ENCODE measurements at regions of chr5 and their contacts with region 1.

Region 1: GRCh38 chr5:147576646-147577535 is 67.0 kb upstream of the DPYSL3 start:
- DNase-seq: no peak
- ATAC-seq: peak; percentile 90
- H3K4me3 ChIP-seq: no peak overlapping the region
- H3K27ac ChIP-seq: no peak overlapping the region
- H3K4me1 ChIP-seq: no peaks in the 10 kb centered on the region
- H3K27me3 ChIP-seq: no peaks in the 10 kb centered on the region
- CTCF ChIP-seq: peak; percentile 69 to 91 (median 90)
- POLR2A ChIP-seq: no peak
- RAD21 ChIP-seq: peak; percentile 65

Region 2: DNA sequence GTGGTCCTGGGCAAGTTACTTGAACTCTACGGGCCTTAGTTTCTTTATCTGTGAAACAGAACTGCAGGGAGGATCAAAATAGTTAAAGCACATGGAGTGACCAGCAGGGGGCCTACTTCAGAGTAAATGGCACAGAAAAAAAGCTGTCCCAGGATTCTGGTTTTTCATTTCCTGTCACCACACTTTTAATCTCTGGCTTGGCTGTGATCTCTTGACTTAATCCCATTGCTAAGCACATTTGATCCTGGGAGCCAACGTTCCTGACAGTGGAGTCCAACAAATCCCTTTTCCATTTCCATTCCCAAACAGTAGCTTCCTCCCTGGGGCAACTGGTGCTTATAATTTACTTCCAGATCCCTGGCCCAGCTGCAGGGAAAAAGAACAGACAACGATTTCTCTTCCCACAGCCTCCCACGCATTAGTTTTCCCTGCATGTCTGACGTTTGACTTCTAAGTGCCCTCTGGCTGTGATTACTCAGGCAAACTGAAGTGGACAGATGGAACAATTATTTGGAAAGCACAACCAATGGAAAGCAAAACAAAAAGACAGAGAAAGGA is 478.6 kb before region 1 on chr5:
- CTCF ChIA-PET with region 1: interaction called, 5 read pairs
- POLR2A ChIA-PET with region 1: no interaction called
- RAD21 ChIA-PET with region 1: no interaction called
- intact Hi-C with region 1: loop called (anchors 5 kb)
- DNase-seq: peak; percentile 42
- ATAC-seq: peak; percentile 84
- H3K4me3 ChIP-seq: no peak overlapping the region
- H3K27ac ChIP-seq: no peak overlapping the region
- H3K4me1 ChIP-seq: peaks cover 3 to 7% of the 10 kb centered on the region in 2 experiments; a peak in 3 of 4 replicates
- H3K27me3 ChIP-seq: no peaks in the 10 kb centered on the region
- CTCF ChIP-seq: peak; percentile 44 to 72 (median 68); a peak in 5 of 6 replicates
- POLR2A ChIP-seq: no peak
- RAD21 ChIP-seq: peak; percentile 42

Region 3: DNA sequence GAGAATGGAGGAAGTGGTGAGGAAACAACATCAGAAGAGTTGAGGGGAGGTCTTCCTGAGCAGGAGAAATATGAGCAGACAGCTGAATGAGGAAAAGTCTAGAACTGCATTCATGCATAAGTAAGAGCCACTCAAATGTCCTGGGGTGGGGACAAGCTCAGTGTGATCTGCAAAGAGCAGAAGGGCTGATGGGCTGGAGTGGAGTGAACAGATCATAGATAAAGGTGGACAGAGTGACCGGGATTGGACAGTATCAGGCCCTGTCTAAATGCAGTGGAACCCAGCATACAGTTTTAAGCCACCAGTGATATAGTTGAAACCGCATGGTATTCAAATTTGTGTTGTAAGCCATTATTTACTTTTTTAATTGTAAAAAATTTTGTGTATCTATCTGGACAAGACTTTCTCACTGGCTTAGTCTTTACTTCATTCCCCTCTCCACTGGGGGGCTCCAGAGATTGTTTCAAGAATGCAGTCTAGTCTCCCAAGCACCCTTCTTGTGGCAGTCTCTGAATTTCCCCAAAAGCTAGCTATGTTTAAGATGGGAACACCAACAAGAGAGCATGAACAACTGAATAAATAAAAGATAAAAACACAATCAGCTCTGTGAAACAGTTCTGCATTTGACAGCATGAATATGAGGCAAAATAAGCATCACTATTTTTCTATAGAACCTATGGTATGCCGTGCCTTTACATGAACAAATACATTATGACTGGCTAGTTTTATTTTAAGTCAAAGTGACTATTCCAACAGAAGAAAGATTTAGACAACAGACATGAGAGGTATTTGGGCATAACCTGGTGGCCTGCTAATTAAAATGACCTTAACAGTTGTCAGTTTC is 352.7 kb before region 1 on chr5:
- CTCF ChIA-PET with region 1: interaction called, 9 read pairs
- POLR2A ChIA-PET with region 1: no interaction called
- RAD21 ChIA-PET with region 1: interaction called in 1 of 2 experiments, 3 read pairs
- intact Hi-C with region 1: loop called (anchors 1 kb)
- DNase-seq: peak; percentile 36
- ATAC-seq: peak; percentile 92
- H3K4me3 ChIP-seq: no peak overlapping the region
- H3K27ac ChIP-seq: no peak overlapping the region
- H3K4me1 ChIP-seq: no peaks in the 10 kb centered on the region
- H3K27me3 ChIP-seq: peaks cover 24% of the 10 kb centered on the region; the same call in 1 of the 2 replicates
- CTCF ChIP-seq: peak; percentile 61 to 83 (median 61)
- POLR2A ChIP-seq: no peak
- RAD21 ChIP-seq: peak; percentile 85

Region 4: GRCh38 chr5:147464211-147464610 is 112.7 kb before region 1 on chr5:
- CTCF ChIA-PET with region 1: interaction called, 49 read pairs
- POLR2A ChIA-PET with region 1: no interaction called
- RAD21 ChIA-PET with region 1: interaction called, 3 read pairs
- intact Hi-C with region 1: loop called (anchors 1 kb)
- DNase-seq: peak; percentile 19
- ATAC-seq: peak; percentile 75
- H3K4me3 ChIP-seq: no peak overlapping the region
- H3K27ac ChIP-seq: no peak overlapping the region
- H3K4me1 ChIP-seq: no peaks in the 10 kb centered on the region
- H3K27me3 ChIP-seq: no peaks in the 10 kb centered on the region
- CTCF ChIP-seq: peak; percentile 37 to 59 (median 48); a peak in 4 of 6 replicates
- POLR2A ChIP-seq: no peak
- RAD21 ChIP-seq: peak; percentile 55

Region 5: DNA sequence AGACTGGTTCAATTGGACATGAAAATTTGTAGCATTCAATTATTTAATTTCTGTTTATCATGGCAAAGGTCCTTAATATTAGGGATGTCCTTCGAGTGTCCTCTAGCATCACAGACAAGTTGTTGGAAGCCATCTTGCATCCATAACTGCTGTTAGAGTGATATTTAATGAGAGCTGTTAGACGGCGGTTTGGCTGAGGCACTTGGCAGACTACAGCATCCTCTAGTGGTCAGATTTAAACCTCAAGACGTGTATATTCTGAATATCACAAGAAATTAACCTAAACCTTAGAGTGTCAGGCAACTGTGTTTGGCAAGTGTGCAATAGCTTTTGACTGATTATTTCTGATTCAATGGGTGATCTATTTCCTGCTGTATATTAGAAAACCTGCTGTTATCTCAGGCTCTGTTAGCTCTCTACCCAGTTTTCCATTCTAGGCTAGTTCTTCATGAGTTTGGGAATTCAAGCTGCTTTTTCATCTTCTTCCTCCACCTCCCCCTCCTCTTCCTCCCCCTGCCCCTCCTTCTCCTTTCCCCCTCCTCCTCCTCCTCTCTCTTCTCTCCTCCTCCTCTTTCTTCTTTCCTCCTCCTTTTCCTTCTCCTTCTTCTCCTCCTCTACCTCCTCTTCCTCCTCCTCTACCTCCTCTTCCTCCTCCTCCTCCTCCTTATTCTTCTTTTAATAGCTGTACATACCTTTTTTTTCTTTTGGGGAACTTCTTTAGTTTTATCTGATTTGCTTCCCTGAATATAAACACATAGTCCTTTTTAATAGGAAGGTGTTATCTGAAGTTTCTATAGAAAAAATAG is 246.0 kb after region 1 on chr5:
- CTCF ChIA-PET with region 1: interaction called, 18 read pairs
- POLR2A ChIA-PET with region 1: no interaction called
- RAD21 ChIA-PET with region 1: no interaction called
- intact Hi-C with region 1: no loop called
- DNase-seq: peak; percentile 60
- ATAC-seq: peak; percentile 96
- H3K4me3 ChIP-seq: no peak overlapping the region
- H3K27ac ChIP-seq: no peak overlapping the region
- H3K4me1 ChIP-seq: no peaks in the 10 kb centered on the region
- H3K27me3 ChIP-seq: peaks cover 17% of the 10 kb centered on the region
- CTCF ChIP-seq: peak; percentile 72 to 93 (median 73)
- POLR2A ChIP-seq: no peak
- RAD21 ChIP-seq: peak; percentile 92